Activated naive CD8-positive, alpha-beta T cell treated with anti-CD3 and anti-CD28 coated beads, Interleukin-2, amount 10 ng/mL, durations not matched to agents 7 days and 5 days (primary cell): ENCODE measurements at regions of chr16 and their contacts with region 1.

Region 1: GRCh38 chr16:25066747-25067631 is 44.6 kb upstream of the LCMT1 start:
- DNase-seq: peak; percentile 91
- ATAC-seq: peak; percentile 95
- H3K4me3 Mint-ChIP-seq: peak overlapping the region; percentile 97
- H3K27ac Mint-ChIP-seq: peak overlapping the region; percentile 95
- H3K4me1 Mint-ChIP-seq: peaks cover 39% of the 10 kb centered on the region
- H3K27me3 Mint-ChIP-seq: no peaks in the 10 kb centered on the region

Region 2: GRCh38 chr16:25041471-25041870 is 25.5 kb before region 1 on chr16:
- POLR2A ChIA-PET with region 1: no interaction called
- DNase-seq: no peak
- ATAC-seq: no peak
- H3K4me3 Mint-ChIP-seq: no peak overlapping the region
- H3K27ac Mint-ChIP-seq: no peak overlapping the region
- H3K4me1 Mint-ChIP-seq: peaks cover 6% of the 10 kb centered on the region
- H3K27me3 Mint-ChIP-seq: no peaks in the 10 kb centered on the region

Region 3: GRCh38 chr16:25051406-25052150 is 15.4 kb before region 1 on chr16:
- POLR2A ChIA-PET with region 1: interaction called, 20 read pairs
- DNase-seq: no peak
- ATAC-seq: no peak
- H3K4me3 Mint-ChIP-seq: peak overlapping the region; percentile 67
- H3K27ac Mint-ChIP-seq: peak overlapping the region; percentile 73
- H3K4me1 Mint-ChIP-seq: peaks cover 50% of the 10 kb centered on the region
- H3K27me3 Mint-ChIP-seq: no peaks in the 10 kb centered on the region

Region 4: DNA sequence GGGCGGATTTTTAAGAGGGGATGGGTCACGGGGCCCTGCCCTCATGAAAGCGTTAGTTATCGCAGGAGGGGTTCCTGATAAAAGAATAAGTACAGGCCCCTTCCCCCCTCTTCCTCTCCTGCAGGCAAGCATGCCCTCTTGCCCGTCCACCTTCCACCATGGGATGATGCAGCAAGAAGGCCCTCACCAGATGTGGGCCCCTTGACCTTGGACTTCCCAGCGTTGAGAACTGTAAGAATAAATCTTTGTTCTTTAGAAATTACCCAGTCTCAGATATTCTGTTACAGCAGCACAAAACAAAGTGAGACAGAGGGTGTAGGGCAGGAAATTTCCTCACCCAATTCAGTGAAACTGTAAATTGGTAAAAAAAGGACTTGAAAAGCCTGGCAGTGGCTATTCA is 16.7 kb after region 1 on chr16:
- POLR2A ChIA-PET with region 1: interaction called, 15 read pairs
- DNase-seq: no peak
- ATAC-seq: no peak
- H3K4me3 Mint-ChIP-seq: no peak overlapping the region
- H3K27ac Mint-ChIP-seq: no peak overlapping the region
- H3K4me1 Mint-ChIP-seq: peaks cover 3% of the 10 kb centered on the region
- H3K27me3 Mint-ChIP-seq: no peaks in the 10 kb centered on the region

Region 5: GRCh38 chr16:25093208-25094061 is 26.4 kb after region 1 on chr16:
- POLR2A ChIA-PET with region 1: interaction called, 11 read pairs
- DNase-seq: peak; percentile 37
- ATAC-seq: peak; percentile 72
- H3K4me3 Mint-ChIP-seq: peak overlapping the region; percentile 61
- H3K27ac Mint-ChIP-seq: peak overlapping the region; percentile 83
- H3K4me1 Mint-ChIP-seq: peaks cover 14% of the 10 kb centered on the region
- H3K27me3 Mint-ChIP-seq: no peaks in the 10 kb centered on the region

Region 6: GRCh38 chr16:25111403-25112166 is 44.6 kb after region 1 on chr16 and contains the start of gene LCMT1:
- POLR2A ChIA-PET with region 1: interaction called, 179 read pairs
- DNase-seq: peak; percentile 86
- ATAC-seq: peak; percentile 92
- H3K4me3 Mint-ChIP-seq: peak within 1 kb of the TSS; percentile 95
- H3K27ac Mint-ChIP-seq: peak within 1 kb of the TSS; percentile 92
- H3K4me1 Mint-ChIP-seq: peaks cover 42% of the 10 kb centered on the region
- H3K27me3 Mint-ChIP-seq: no peaks in the 10 kb centered on the region
- total RNA-seq, gene LCMT1: 37.7 to 42.8 TPM